ENCODE measurements at regions of chr2 and their contacts with region 1.

Region 1: DNA sequence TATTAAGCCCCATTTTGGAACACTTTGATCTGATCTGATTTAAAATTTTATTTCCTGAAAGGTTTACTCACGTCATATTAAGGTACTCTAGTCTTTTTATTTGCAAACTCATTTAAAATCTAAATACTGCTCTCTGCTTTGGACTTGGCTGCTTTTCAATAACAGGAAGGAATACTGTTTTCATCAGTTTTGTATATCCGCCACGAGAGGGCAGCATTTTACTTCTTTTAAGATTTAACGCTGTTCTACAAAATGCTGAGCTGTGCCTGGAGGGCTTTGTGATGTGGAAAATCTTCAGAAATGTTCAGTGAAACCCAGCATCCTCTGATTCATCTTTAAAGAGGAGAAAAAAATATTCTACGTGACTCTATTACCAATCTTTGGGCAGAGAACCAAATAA is 37.5 kb upstream of the SLC38A11 start:
- DNase-seq: peak; percentile 82
- H3K4me3 Mint-ChIP-seq: no peak overlapping the region
- H3K27ac Mint-ChIP-seq: no peak overlapping the region
- H3K4me1 Mint-ChIP-seq: peaks cover 30% of the 10 kb centered on the region
- H3K27me3 Mint-ChIP-seq: peaks cover 2% of the 10 kb centered on the region

Region 2: DNA sequence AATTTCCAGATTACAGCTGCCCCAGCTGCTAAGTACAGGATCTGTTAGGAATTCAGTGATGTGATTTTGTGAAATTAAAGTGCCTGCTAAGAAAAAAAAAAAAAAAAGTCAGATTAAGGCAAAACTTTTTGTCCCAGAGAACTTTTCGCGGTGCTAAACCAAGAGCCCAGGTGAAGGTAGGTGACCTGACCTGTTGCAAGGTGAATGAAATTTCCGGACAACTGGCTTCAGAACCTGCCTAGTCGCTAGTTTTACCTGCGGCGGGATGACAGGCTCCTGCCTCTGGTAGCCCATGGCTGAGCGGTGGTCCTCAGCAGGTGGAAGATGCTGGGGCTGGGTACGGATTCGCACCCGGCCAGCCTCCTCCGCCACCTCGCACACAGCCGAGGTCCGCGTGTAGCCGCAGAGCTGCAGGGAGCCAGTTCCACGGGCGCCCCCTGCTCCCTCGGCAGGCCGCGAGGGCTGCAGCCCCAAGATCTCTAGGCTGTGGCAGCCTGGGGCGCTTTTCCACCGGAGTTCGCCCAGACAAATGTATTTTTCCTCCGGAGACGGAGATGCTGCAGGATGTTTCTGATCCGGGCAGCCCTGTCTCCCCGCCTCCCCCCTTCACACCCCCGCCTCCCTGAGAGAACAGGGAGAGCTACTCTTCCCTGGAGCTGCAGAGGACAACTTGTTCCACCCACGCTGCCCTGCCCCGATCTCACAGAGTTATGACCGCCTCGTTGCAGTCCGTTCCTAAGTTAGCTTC is 37.7 kb before region 1 on chr2 and contains the start of gene SLC38A11:
- intact Hi-C with region 1: no loop called
- DNase-seq: no peak
- H3K4me3 Mint-ChIP-seq: no peak within 1 kb of the TSS
- H3K27ac Mint-ChIP-seq: no peak within 1 kb of the TSS
- H3K4me1 Mint-ChIP-seq: no peaks in the 10 kb centered on the region
- H3K27me3 Mint-ChIP-seq: peaks cover 19% of the 10 kb centered on the region
- total RNA-seq, gene SLC38A11: not detected in 2 replicates

Region 3: GRCh38 chr2:165293440-165294353 is 300.9 kb after region 1 on chr2:
- intact Hi-C with region 1: loop called (anchors 2 kb)
- DNase-seq: peak; percentile 90
- H3K4me3 Mint-ChIP-seq: no peak overlapping the region
- H3K27ac Mint-ChIP-seq: no peak overlapping the region
- H3K4me1 Mint-ChIP-seq: peaks cover 2% of the 10 kb centered on the region
- H3K27me3 Mint-ChIP-seq: peaks cover 12% of the 10 kb centered on the region